ENCODE measurements at regions of chr4 and their contacts with region 1.

Region 1: GRCh38 chr4:98995183-98996055 is at the start of gene METAP1:
- DNase-seq: peak; percentile 91 to 99 (median 96)
- ATAC-seq: peak; percentile 83
- H3K4me3 ChIP-seq: peak within 1 kb of the TSS; percentile 79 to 87
- H3K4me3 Mint-ChIP-seq: peak within 1 kb of the TSS; percentile 89
- H3K27ac ChIP-seq: peak within 1 kb of the TSS; percentile 77 to 83
- H3K27ac Mint-ChIP-seq: peak within 1 kb of the TSS; percentile 98
- H3K4me1 ChIP-seq: peaks cover 21% of the 10 kb centered on the region
- H3K4me1 Mint-ChIP-seq: peaks cover 39% of the 10 kb centered on the region
- H3K27me3 ChIP-seq: no peaks in the 10 kb centered on the region
- H3K27me3 Mint-ChIP-seq: no peaks in the 10 kb centered on the region
- CTCF ChIP-seq: peak; percentile 66
- total RNA-seq, gene METAP1: 21.0 to 23.2 TPM

Region 2: DNA sequence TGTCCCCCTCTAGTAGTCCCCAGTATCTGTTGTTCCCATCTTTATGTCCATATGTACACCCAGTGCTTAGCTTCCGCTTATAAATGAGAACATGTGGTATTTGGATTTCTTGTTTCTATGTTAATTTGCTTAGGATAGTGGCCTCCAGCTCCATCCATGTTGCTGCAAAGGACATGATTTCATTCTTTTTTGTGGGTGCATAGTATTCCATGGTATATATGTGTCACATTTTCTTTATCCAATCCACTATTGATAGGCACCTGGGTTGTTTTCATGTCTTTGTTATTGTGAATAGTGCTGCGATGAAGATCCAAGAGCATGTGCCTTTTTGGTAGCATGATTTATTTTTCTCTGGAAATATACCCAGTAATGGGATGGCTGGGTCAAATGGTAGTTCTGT is 727.9 kb before region 1 on chr4:
- CTCF ChIA-PET with region 1: interaction called, 6 read pairs
- POLR2A ChIA-PET with region 1: no interaction called
- intact Hi-C with region 1: loop called (anchors 1 to 2 kb)
- DNase-seq: no peak
- ATAC-seq: no peak
- H3K4me3 ChIP-seq: no peak overlapping the region
- H3K4me3 Mint-ChIP-seq: no peak overlapping the region
- H3K27ac ChIP-seq: no peak overlapping the region
- H3K27ac Mint-ChIP-seq: peak overlapping the region; percentile 60
- H3K4me1 ChIP-seq: peaks cover 12% of the 10 kb centered on the region
- H3K4me1 Mint-ChIP-seq: peaks cover 45% of the 10 kb centered on the region
- H3K27me3 ChIP-seq: no peaks in the 10 kb centered on the region
- H3K27me3 Mint-ChIP-seq: no peaks in the 10 kb centered on the region
- CTCF ChIP-seq: no peak

Region 3: DNA sequence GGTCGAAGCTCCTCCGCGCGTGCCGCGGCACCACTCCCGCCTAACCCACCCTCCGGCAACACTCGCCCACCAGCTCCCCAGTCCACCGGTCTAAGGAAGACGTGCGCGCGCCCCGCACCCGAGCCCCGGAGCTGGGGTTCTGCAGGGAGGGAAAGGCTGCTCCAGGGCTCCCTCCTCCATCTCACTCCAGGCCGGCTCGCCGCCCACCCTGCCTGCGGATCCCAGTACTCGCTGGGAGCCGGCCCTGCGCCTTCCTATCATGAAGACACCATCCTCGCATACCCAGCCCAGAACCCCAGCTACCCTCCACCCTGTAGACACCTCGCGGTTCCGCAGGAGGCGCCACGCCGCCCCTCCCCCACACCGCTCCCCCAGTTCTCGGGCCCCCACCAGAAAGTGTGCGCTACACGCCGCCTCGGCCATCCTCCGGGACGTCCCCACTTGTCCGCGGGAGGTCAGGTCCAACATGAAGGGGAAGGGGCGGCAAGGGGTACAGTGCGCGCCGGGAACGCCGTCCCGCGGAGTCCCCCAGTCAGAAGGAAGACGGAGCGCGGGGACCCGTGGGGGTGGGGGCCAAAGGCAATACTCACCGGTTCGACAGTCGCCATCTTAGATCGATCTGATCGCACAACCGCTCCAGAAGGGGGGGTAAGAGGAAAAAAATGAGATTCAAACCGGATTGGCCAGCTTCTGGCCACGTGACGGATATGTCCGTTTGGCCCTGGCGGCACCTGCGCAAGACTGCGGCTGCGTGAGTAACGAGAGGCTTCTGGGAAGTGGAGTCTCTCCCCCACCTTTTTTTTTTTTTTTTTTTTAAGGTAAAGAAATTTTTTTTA is 66.7 kb before region 1 on chr4 and contains the start of gene EIF4E:
- CTCF ChIA-PET with region 1: interaction called, 23 read pairs
- POLR2A ChIA-PET with region 1: interaction called, 31 read pairs
- intact Hi-C with region 1: loop called (anchors 1 kb)
- DNase-seq: peak; percentile 93 to 99 (median 94)
- ATAC-seq: peak; percentile 80
- H3K4me3 ChIP-seq: peak within 1 kb of the TSS; percentile 99 to 100
- H3K4me3 Mint-ChIP-seq: peak within 1 kb of the TSS; percentile 99
- H3K27ac ChIP-seq: peak within 1 kb of the TSS; percentile 89 to 94
- H3K27ac Mint-ChIP-seq: peak within 1 kb of the TSS; percentile 97
- H3K4me1 ChIP-seq: peaks cover 15% of the 10 kb centered on the region
- H3K4me1 Mint-ChIP-seq: peaks cover 46% of the 10 kb centered on the region
- H3K27me3 ChIP-seq: no peaks in the 10 kb centered on the region
- H3K27me3 Mint-ChIP-seq: no peaks in the 10 kb centered on the region
- CTCF ChIP-seq: peak; percentile 32
- total RNA-seq, gene EIF4E: 66.7 to 68.5 TPM

Region 4: GRCh38 chr4:99054428-99054994 is 59.1 kb after region 1 on chr4:
- CTCF ChIA-PET with region 1: interaction called, 251 read pairs
- POLR2A ChIA-PET with region 1: interaction called, 34 read pairs
- intact Hi-C with region 1: loop called (anchors 1 kb)
- DNase-seq: no peak
- ATAC-seq: no peak
- H3K4me3 ChIP-seq: no peak overlapping the region
- H3K4me3 Mint-ChIP-seq: no peak overlapping the region
- H3K27ac ChIP-seq: peak overlapping the region in 1 of 2 experiments; percentile 15
- H3K27ac Mint-ChIP-seq: peak overlapping the region; percentile 42
- H3K4me1 ChIP-seq: peaks cover 3% of the 10 kb centered on the region
- H3K4me1 Mint-ChIP-seq: peaks cover 7% of the 10 kb centered on the region
- H3K27me3 ChIP-seq: no peaks in the 10 kb centered on the region
- H3K27me3 Mint-ChIP-seq: no peaks in the 10 kb centered on the region
- CTCF ChIP-seq: no peak

Region 5: DNA sequence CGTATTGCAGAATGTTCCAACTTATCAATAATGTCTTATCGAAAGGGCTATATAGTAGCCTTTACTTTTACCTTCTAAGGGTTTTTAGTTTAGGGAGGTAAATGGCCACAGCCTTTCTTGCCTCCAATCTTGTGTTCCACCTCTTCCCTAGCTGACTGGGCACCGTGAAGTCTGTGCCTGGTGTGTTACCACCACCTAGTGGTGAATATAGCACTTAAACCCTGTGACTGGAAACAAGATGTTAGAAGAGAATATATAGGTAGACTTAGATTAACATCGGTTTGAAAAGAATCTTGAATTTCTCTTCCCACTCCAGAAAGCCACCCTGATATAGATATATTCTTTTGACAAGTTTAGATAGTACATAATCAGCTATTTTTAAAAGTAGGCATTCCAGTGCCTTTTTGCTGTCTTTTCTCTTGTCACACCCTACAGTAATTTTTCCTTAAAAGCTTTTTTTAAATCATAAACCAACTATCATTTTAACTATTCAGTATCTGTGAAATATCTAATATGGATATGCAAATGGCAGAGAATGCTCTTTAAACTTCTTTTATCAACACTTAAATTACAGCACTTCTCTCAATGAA is 467.6 kb after region 1 on chr4:
- CTCF ChIA-PET with region 1: no interaction called
- POLR2A ChIA-PET with region 1: no interaction called
- intact Hi-C with region 1: loop called in 1 of 2 experiments (anchors 2 kb)
- DNase-seq: peak; percentile 3 to 64 (median 38)
- ATAC-seq: peak; percentile 67
- H3K4me3 ChIP-seq: no peak overlapping the region
- H3K4me3 Mint-ChIP-seq: no peak overlapping the region
- H3K27ac ChIP-seq: no peak overlapping the region
- H3K27ac Mint-ChIP-seq: no peak overlapping the region
- H3K4me1 ChIP-seq: no peaks in the 10 kb centered on the region
- H3K4me1 Mint-ChIP-seq: no peaks in the 10 kb centered on the region
- H3K27me3 ChIP-seq: peaks cover 0 to 2% of the 10 kb centered on the region in 2 experiments
- H3K27me3 Mint-ChIP-seq: peaks cover 13% of the 10 kb centered on the region
- CTCF ChIP-seq: peak; percentile 75

Region 6: GRCh38 chr4:99816545-99817308 is 821.3 kb after region 1 on chr4 and contains the start of gene DAPP1:
- CTCF ChIA-PET with region 1: no interaction called
- POLR2A ChIA-PET with region 1: no interaction called
- intact Hi-C with region 1: loop called in 1 of 2 experiments (anchors 1 kb)
- DNase-seq: peak; percentile 48 to 91 (median 70)
- ATAC-seq: peak; percentile 97
- H3K4me3 ChIP-seq: peak within 1 kb of the TSS; percentile 36 to 49
- H3K4me3 Mint-ChIP-seq: peak within 1 kb of the TSS; percentile 85
- H3K27ac ChIP-seq: peak within 1 kb of the TSS; percentile 22 to 53
- H3K27ac Mint-ChIP-seq: peak within 1 kb of the TSS; percentile 89
- H3K4me1 ChIP-seq: peaks cover 38% of the 10 kb centered on the region
- H3K4me1 Mint-ChIP-seq: peaks cover 56% of the 10 kb centered on the region
- H3K27me3 ChIP-seq: no peaks in the 10 kb centered on the region
- H3K27me3 Mint-ChIP-seq: no peaks in the 10 kb centered on the region
- CTCF ChIP-seq: no peak
- total RNA-seq, gene DAPP1: 3.2 to 3.6 TPM

Measured in CD8-positive, alpha-beta T cell (primary cell).